Common myeloid progenitor, CD34-positive (primary cell): ENCODE measurements at regions of chr3 and their contacts with region 1.

Region 1: GRCh38 chr3:72413228-72413627 is 435.0 kb downstream of the SHQ1 start:
- DNase-seq: no peak
- H3K4me3 ChIP-seq: no peak overlapping the region
- H3K27ac ChIP-seq: no peak overlapping the region
- H3K4me1 ChIP-seq: peaks cover 13 to 42% (median 35%) of the 10 kb centered on the region in 4 experiments
- H3K27me3 ChIP-seq: no peaks in the 10 kb centered on the region

Region 2: DNA sequence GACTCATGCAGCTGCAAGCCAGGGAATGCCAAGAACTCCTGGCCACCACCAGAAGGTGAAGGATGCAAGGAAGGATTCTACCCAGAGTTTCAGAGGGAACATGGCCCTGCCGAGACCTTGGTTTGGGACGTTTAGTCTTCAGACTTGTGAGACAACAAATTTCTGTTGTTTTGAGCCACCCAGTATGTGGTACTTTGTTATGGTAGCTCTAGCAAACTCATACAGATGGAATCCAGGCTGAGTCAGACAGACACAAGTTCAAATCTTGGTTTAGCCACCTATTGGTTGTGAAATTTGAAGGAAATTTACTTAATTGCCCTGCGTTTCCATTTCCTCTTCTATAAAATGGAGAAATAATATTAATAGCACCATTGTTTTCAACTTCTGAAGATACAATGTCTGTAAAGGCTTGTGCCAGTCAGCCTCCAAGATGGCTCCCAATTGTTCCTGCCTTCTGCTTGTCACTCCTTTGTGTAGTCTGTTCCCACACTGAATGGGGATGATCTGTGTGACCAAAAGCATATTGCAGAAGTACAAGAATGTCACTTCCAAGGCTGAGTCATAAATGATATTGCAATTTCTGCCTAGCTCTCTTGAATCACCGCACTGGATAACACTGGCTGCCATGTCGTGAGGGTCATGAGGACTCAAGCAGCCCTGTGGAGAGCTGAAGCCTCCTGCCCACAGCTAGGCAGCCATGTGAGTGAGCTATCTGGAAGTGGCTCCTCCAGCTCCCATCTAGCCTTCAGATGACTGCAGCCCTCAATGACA is 404.8 kb before region 1 on chr3:
- CTCF ChIA-PET with region 1: no interaction called
- POLR2A ChIA-PET with region 1: no interaction called
- DNase-seq: peak; percentile 31 to 88 (median 84)
- H3K4me3 ChIP-seq: no peak overlapping the region
- H3K27ac ChIP-seq: no peak overlapping the region
- H3K4me1 ChIP-seq: no peaks in the 10 kb centered on the region
- H3K27me3 ChIP-seq: no peaks in the 10 kb centered on the region

Region 3: DNA sequence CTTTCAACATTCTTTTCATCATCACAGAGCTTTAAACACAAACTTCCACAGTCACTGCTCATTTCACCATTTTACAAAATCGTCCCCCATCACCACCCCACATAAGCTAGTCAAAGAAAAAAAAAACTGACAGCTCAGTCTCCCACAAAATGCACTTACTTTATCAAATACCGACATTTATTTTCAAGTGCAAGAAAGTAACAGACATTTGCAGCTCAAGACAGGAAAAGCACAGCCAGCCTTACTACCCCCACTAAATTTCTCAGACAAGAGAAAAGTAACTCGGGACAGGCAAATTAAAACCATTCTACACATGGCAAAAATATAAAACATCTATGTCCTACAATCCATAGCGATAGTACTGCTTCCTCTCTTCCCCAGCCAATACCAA is 32.6 kb after region 1 on chr3:
- CTCF ChIA-PET with region 1: interaction called, 7 read pairs
- POLR2A ChIA-PET with region 1: interaction called, 12 read pairs
- DNase-seq: no peak
- H3K4me3 ChIP-seq: peak overlapping the region in 6 of 7 experiments; percentile 92 to 99 (median 97)
- H3K27ac ChIP-seq: peak overlapping the region; percentile 81 to 91
- H3K4me1 ChIP-seq: peaks cover 26 to 55% (median 43%) of the 10 kb centered on the region in 4 experiments
- H3K27me3 ChIP-seq: no peaks in the 10 kb centered on the region

Region 4: GRCh38 chr3:72535772-72536171 is 122.5 kb after region 1 on chr3:
- CTCF ChIA-PET with region 1: no interaction called
- POLR2A ChIA-PET with region 1: no interaction called
- DNase-seq: peak; percentile 50 to 89 (median 77)
- H3K4me3 ChIP-seq: no peak overlapping the region
- H3K27ac ChIP-seq: no peak overlapping the region
- H3K4me1 ChIP-seq: peaks cover 0 to 20% (median 10%) of the 10 kb centered on the region in 4 experiments
- H3K27me3 ChIP-seq: no peaks in the 10 kb centered on the region